ENCODE measurements at regions of chr2 and their contacts with region 1.

Region 1: GRCh38 chr2:198296665-198297308 is 492.4 kb downstream of the PLCL1 start:
- DNase-seq: peak; percentile 51
- ATAC-seq: peak; percentile 97
- H3K4me3 ChIP-seq: no peak overlapping the region
- H3K27ac ChIP-seq: no peak overlapping the region
- H3K4me1 ChIP-seq: no peaks in the 10 kb centered on the region
- H3K27me3 ChIP-seq: no peaks in the 10 kb centered on the region
- CTCF ChIP-seq: peak; percentile 48 to 76 (median 61); a peak in 5 of 6 replicates
- POLR2A ChIP-seq: no peak
- RAD21 ChIP-seq: peak; percentile 82

Region 2: DNA sequence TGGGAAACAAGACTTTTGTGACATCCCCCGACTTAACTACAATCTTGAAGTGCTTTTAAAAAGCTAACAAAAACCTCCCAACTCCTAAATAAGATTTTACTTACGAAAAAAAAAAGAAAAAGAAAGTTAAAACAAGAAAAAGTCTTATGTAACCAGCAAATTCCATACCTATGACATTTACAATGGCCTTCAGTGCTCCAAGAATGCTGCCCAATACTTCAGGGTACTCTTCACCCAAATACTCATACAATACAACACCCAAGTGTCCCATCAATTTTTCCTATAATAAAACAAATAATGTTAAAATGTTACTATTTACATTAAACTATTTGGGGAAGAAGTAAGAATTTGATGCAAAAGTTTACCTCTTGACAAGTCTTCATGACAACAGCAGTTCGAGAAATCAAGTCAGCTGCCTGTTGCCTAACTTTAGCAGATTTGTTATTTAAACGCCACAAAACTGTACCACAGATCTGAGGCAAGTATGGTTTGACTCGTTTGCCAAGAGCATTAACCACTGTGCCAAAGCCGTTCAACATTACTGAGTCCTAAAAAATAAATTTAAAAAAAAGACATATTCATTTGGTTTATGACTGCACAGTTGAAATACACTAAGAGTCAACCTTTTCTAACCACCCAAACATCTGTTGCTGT is 896.8 kb before region 1 on chr2:
- CTCF ChIA-PET with region 1: no interaction called
- POLR2A ChIA-PET with region 1: no interaction called
- RAD21 ChIA-PET with region 1: no interaction called
- intact Hi-C with region 1: loop called (anchors 10 kb)
- DNase-seq: no peak
- ATAC-seq: no peak
- H3K4me3 ChIP-seq: no peak overlapping the region
- H3K27ac ChIP-seq: no peak overlapping the region
- H3K4me1 ChIP-seq: no peaks in the 10 kb centered on the region
- H3K27me3 ChIP-seq: no peaks in the 10 kb centered on the region
- CTCF ChIP-seq: no peak
- POLR2A ChIP-seq: no peak
- RAD21 ChIP-seq: no peak

Region 3: GRCh38 chr2:197705121-197705911 is 591.5 kb before region 1 on chr2 and contains the start of gene MARS2:
- CTCF ChIA-PET with region 1: no interaction called
- POLR2A ChIA-PET with region 1: no interaction called
- RAD21 ChIA-PET with region 1: no interaction called
- intact Hi-C with region 1: loop called (anchors 10 kb)
- DNase-seq: peak; percentile 77
- ATAC-seq: peak; percentile 87
- H3K4me3 ChIP-seq: peak within 1 kb of the TSS; percentile 78 to 89
- H3K27ac ChIP-seq: peak within 1 kb of the TSS; percentile 66
- H3K4me1 ChIP-seq: peaks cover 11 to 19% of the 10 kb centered on the region in 2 experiments; a peak in 3 of 4 replicates
- H3K27me3 ChIP-seq: no peaks in the 10 kb centered on the region
- CTCF ChIP-seq: no peak
- POLR2A ChIP-seq: peak; percentile 92
- RAD21 ChIP-seq: no peak
- total RNA-seq, gene MARS2: 14.4 TPM

Region 4: GRCh38 chr2:197803033-197803444 is 493.7 kb before region 1 on chr2:
- CTCF ChIA-PET with region 1: interaction called, 5 read pairs
- POLR2A ChIA-PET with region 1: no interaction called
- RAD21 ChIA-PET with region 1: no interaction called
- intact Hi-C with region 1: loop called (anchors 1 kb)
- DNase-seq: peak; percentile 45
- ATAC-seq: peak; percentile 60
- H3K4me3 ChIP-seq: no peak overlapping the region
- H3K27ac ChIP-seq: no peak overlapping the region
- H3K4me1 ChIP-seq: peaks cover 0 to 5% of the 10 kb centered on the region in 2 experiments; a peak in 1 of 4 replicates
- H3K27me3 ChIP-seq: peaks cover 37% of the 10 kb centered on the region; the same call in 1 of the 2 replicates
- CTCF ChIP-seq: peak; percentile 63 to 76 (median 64)
- POLR2A ChIP-seq: no peak
- RAD21 ChIP-seq: peak; percentile 84

Region 5: GRCh38 chr2:198127627-198128026 is 169.2 kb before region 1 on chr2:
- CTCF ChIA-PET with region 1: interaction called, 3 read pairs
- POLR2A ChIA-PET with region 1: no interaction called
- RAD21 ChIA-PET with region 1: no interaction called
- intact Hi-C with region 1: loop called (anchors 5 kb)
- DNase-seq: peak; percentile 51
- ATAC-seq: peak; percentile 73; the same call in 1 of the 2 replicates
- H3K4me3 ChIP-seq: no peak overlapping the region
- H3K27ac ChIP-seq: no peak overlapping the region
- H3K4me1 ChIP-seq: no peaks in the 10 kb centered on the region
- H3K27me3 ChIP-seq: peaks cover 15% of the 10 kb centered on the region; the same call in 1 of the 2 replicates
- CTCF ChIP-seq: peak; percentile 63 to 66 (median 66); a peak in 5 of 6 replicates
- POLR2A ChIP-seq: no peak
- RAD21 ChIP-seq: peak; percentile 76